GM10248 (cell line): ENCODE measurements at regions of chr14 and their contacts with region 1.

Region 1: DNA sequence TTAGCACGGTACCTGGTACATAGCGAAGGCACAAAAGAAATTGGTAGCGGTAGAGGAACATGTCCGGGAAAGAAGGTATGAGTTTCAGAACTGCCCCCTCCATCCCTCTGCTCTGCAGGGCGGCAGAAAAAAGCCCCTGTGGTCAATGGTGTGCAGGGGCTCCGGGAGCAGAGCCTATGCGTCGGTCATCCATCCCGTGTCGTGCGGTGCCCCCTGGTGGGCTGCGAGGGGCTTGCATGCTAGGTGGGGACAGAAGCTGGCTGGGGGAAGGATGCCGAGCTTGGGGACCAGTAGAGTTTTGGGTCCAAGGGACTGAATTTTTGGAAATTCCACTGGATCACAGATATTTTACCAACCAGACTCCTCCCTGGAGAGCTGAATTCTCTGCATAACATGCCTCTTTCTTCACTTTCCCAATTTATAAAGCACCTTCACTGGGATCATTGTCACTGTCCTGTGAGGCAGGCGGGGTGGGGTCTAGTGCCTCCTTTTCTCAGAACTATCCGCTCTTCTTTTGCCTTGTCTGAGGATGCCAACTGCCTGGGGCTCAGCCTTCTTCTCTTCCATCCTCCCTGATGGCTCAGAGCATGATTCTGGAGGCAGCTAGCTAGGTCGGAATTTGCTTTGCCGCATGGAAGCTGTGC is 148.7 kb downstream of the SMOC1 start:
- DNase-seq: peak; percentile 85
- CTCF ChIP-seq: peak; percentile 96

Region 2: DNA sequence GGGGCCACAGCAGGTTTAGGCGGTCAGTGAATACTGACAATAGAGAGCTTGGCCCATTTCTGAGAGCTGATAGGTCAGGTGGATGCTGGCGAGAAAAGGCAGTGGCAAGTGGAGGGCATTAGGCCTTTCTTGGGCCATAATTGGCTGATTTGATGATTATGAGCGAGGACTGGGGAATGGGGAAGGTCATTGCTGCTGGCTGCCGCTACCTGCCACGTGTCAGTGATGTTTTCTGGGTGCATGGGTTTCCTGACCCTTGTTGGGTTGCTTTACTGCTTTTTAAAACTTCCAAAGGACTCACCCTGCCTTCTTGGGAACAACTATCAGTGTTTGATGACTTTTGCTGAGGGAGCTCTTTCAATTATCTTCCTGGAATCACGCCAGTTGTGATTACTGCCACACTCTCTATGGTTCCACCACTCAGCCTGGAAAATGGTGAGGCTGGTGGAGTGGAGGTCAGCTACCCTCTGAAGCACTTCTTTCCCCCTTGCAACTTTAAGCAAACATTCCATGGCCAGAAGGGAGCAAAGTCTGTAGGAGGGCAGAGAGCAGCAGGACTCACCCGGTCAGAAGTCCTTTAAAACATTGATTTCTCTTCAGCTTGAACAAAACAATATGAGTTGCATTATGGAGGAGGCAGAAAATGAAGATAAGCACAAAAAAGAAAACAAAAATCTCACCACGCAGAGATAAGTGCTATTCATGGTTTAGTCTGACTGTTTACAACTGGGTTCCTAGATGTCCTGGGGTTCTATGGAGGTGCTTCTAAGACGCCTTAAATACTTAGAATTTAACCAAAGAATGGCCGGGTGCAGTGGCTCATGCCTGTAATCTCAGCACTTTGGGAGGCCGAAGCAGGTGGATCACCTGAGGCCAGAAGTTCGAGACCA is 218.7 kb before region 1 on chr14:
- CTCF ChIA-PET with region 1: interaction called, 136 read pairs
- POLR2A ChIA-PET with region 1: no interaction called
- DNase-seq: no peak
- CTCF ChIP-seq: no peak

Region 3: GRCh38 chr14:69827560-69827959 is 200.3 kb before region 1 on chr14:
- CTCF ChIA-PET with region 1: interaction called, 15 read pairs
- POLR2A ChIA-PET with region 1: no interaction called
- DNase-seq: no peak
- CTCF ChIP-seq: no peak

Region 4: DNA sequence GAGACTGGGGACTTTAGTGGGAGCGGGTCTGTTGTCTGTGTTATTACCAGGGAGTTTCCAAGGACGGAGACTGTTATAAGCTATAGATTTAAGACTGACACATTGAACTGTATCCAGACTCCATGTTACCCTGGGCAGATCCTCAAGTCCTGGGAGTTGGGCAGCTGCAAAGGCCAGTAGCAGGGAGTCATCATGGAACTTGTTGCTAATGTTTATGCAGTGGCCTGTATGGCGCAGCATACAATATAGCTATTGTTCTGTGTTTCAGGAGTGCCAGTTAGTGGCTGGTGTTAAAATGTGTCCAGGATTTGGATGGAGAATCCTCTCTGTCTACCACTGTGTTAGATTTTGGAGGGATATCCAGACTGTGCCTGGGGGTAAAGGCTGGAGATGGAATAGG is 117.0 kb before region 1 on chr14:
- CTCF ChIA-PET with region 1: no interaction called
- POLR2A ChIA-PET with region 1: no interaction called
- DNase-seq: no peak
- CTCF ChIP-seq: no peak

Region 5: GRCh38 chr14:69972755-69973154 is 55.2 kb before region 1 on chr14:
- CTCF ChIA-PET with region 1: interaction called, 11 read pairs
- POLR2A ChIA-PET with region 1: no interaction called
- DNase-seq: no peak
- CTCF ChIP-seq: no peak

Region 6: DNA sequence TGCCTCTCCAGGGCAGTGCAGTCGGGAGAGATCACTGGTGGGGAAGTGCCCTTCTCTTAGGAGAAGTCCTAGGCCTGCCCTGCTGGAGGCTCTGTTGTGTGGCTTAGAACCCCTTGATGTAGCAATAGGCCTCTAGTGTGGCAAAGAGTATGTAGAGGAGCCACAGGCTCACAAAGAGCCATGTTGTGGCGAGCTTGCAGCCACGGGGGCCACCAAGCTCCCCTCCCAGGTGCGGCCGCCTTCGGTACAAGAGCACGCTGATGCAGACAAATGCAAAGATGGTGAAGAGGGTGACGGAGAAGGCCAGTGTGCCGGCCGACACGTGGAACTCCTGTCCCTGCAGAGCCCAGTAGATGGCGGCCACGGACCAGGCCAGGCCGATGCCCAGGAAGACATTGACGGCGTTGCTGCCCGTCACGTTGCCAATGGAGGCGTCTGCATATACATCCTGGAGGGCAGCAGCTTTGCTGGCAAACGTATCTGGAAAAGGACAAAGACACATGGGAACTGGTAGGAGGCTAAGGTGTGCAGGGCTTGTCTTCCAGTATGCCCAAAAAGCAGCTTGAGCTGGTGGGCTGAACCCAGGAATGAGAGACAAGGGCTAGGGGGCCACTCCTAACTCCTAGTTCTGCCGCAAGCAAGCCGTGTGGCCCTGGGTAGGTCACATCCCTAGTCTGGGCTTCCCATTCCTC is 18.1 kb after region 1 on chr14:
- CTCF ChIA-PET with region 1: interaction called, 13 read pairs
- POLR2A ChIA-PET with region 1: no interaction called
- DNase-seq: peak; percentile 36
- CTCF ChIP-seq: peak; percentile 9

Region 7: DNA sequence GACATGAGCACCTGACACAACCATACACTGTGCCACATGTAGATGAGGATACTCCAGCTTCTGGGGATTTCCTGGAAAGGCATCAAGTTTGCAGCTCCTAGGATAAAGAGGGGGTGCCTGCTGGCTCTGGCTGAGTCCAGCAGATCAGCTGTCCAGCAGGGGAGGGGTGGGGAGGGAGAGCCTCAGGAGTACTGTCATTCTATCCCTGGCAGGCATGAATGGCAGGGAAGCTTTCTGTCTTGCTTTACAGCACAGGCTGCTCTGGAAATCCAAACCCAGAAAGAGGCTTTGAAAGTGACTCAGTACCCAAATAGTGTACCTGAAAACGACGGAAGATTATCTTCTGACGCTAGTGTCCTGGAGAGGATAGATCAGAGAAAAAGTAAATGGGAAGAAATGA is 128.7 kb after region 1 on chr14:
- CTCF ChIA-PET with region 1: no interaction called
- POLR2A ChIA-PET with region 1: no interaction called
- DNase-seq: no peak
- CTCF ChIP-seq: no peak